B cell (primary cell): ENCODE measurements at regions of chr1 and their contacts with region 1.

Region 1: GRCh38 chr1:92817986-92818764 is 13.7 kb upstream of the RPL5 start:
- DNase-seq: peak; percentile 63
- ATAC-seq: peak; percentile 58
- H3K4me3 ChIP-seq: no peak overlapping the region
- H3K4me3 Mint-ChIP-seq: no peak overlapping the region
- H3K27ac ChIP-seq: no peak overlapping the region
- H3K27ac Mint-ChIP-seq: no peak overlapping the region
- H3K4me1 ChIP-seq: no peaks in the 10 kb centered on the region
- H3K4me1 Mint-ChIP-seq: peaks cover 2% of the 10 kb centered on the region
- H3K27me3 ChIP-seq: no peaks in the 10 kb centered on the region
- H3K27me3 Mint-ChIP-seq: peaks cover 4% of the 10 kb centered on the region
- CTCF ChIP-seq: peak; percentile 80

Region 2: GRCh38 chr1:92201973-92202372 is 616.2 kb before region 1 on chr1:
- CTCF ChIA-PET with region 1: no interaction called
- POLR2A ChIA-PET with region 1: no interaction called
- intact Hi-C with region 1: no loop called
- DNase-seq: no peak
- ATAC-seq: no peak
- H3K4me3 ChIP-seq: no peak overlapping the region
- H3K4me3 Mint-ChIP-seq: no peak overlapping the region
- H3K27ac ChIP-seq: no peak overlapping the region
- H3K27ac Mint-ChIP-seq: no peak overlapping the region
- H3K4me1 ChIP-seq: no peaks in the 10 kb centered on the region
- H3K4me1 Mint-ChIP-seq: no peaks in the 10 kb centered on the region
- H3K27me3 ChIP-seq: no peaks in the 10 kb centered on the region
- H3K27me3 Mint-ChIP-seq: peaks cover 3% of the 10 kb centered on the region
- CTCF ChIP-seq: no peak

Region 3: GRCh38 chr1:92310185-92310597 is 508.0 kb before region 1 on chr1:
- CTCF ChIA-PET with region 1: interaction called, 20 read pairs
- POLR2A ChIA-PET with region 1: no interaction called
- intact Hi-C with region 1: loop called (anchors 1 kb)
- DNase-seq: peak; percentile 26
- ATAC-seq: no peak
- H3K4me3 ChIP-seq: no peak overlapping the region
- H3K4me3 Mint-ChIP-seq: no peak overlapping the region
- H3K27ac ChIP-seq: no peak overlapping the region
- H3K27ac Mint-ChIP-seq: no peak overlapping the region
- H3K4me1 ChIP-seq: no peaks in the 10 kb centered on the region
- H3K4me1 Mint-ChIP-seq: no peaks in the 10 kb centered on the region
- H3K27me3 ChIP-seq: no peaks in the 10 kb centered on the region
- H3K27me3 Mint-ChIP-seq: no peaks in the 10 kb centered on the region
- CTCF ChIP-seq: peak; percentile 76

Region 4: GRCh38 chr1:92356956-92357355 is 461.2 kb before region 1 on chr1:
- CTCF ChIA-PET with region 1: no interaction called
- POLR2A ChIA-PET with region 1: no interaction called
- intact Hi-C with region 1: no loop called
- DNase-seq: no peak
- ATAC-seq: no peak
- H3K4me3 ChIP-seq: no peak overlapping the region
- H3K4me3 Mint-ChIP-seq: no peak overlapping the region
- H3K27ac ChIP-seq: no peak overlapping the region
- H3K27ac Mint-ChIP-seq: no peak overlapping the region
- H3K4me1 ChIP-seq: no peaks in the 10 kb centered on the region
- H3K4me1 Mint-ChIP-seq: no peaks in the 10 kb centered on the region
- H3K27me3 ChIP-seq: no peaks in the 10 kb centered on the region
- H3K27me3 Mint-ChIP-seq: no peaks in the 10 kb centered on the region
- CTCF ChIP-seq: no peak

Region 5: GRCh38 chr1:92749024-92749634 is 69.0 kb before region 1 on chr1:
- CTCF ChIA-PET with region 1: interaction called, 168 read pairs
- POLR2A ChIA-PET with region 1: interaction called, 5 read pairs
- intact Hi-C with region 1: loop called (anchors 1 kb)
- DNase-seq: peak; percentile 68
- ATAC-seq: peak; percentile 70
- H3K4me3 ChIP-seq: no peak overlapping the region
- H3K4me3 Mint-ChIP-seq: no peak overlapping the region
- H3K27ac ChIP-seq: no peak overlapping the region
- H3K27ac Mint-ChIP-seq: no peak overlapping the region
- H3K4me1 ChIP-seq: no peaks in the 10 kb centered on the region
- H3K4me1 Mint-ChIP-seq: peaks cover 8% of the 10 kb centered on the region
- H3K27me3 ChIP-seq: no peaks in the 10 kb centered on the region
- H3K27me3 Mint-ChIP-seq: no peaks in the 10 kb centered on the region
- CTCF ChIP-seq: peak; percentile 79

Region 6: DNA sequence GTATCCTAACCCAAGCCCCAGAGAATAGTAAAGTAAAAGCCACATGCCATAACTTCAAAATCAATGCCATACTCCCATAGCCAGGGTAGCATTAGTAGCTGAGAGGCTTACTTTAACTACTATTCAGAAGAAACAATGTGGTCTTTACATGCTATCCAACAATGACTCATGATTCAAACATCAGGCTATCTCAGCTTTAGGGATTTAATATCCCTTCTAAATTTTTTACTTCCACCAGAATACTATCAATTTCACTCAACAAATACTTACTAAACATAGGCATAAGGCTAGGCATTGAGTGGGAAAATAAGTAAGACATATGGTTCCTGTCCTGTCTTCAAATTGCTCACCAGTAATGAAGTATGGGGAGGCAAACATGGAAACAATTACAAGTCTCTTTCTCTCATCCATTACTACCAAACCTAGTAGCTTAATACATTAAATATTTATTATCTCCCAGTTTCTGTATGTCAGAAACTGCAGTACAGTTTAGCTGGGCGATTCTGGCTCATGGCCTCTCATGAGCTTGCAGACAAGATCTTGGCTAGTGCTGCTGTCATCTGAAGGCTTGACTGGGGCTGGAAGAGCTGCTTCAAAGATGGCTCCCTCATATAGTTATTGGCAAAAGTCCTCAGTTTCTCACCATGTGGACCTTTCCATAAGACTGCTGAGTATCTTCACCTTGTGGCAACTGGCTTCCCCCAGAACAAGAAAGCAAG is 64.0 kb before region 1 on chr1:
- CTCF ChIA-PET with region 1: interaction called, 168 read pairs
- POLR2A ChIA-PET with region 1: no interaction called
- intact Hi-C with region 1: loop called (anchors 1 kb)
- DNase-seq: no peak
- ATAC-seq: no peak
- H3K4me3 ChIP-seq: no peak overlapping the region
- H3K4me3 Mint-ChIP-seq: no peak overlapping the region
- H3K27ac ChIP-seq: no peak overlapping the region
- H3K27ac Mint-ChIP-seq: no peak overlapping the region
- H3K4me1 ChIP-seq: no peaks in the 10 kb centered on the region
- H3K4me1 Mint-ChIP-seq: peaks cover 6% of the 10 kb centered on the region
- H3K27me3 ChIP-seq: no peaks in the 10 kb centered on the region
- H3K27me3 Mint-ChIP-seq: no peaks in the 10 kb centered on the region
- CTCF ChIP-seq: no peak

Region 7: GRCh38 chr1:92784639-92785500 is 33.3 kb before region 1 on chr1 and contains the start of gene EVI5:
- CTCF ChIA-PET with region 1: interaction called, 22 read pairs
- POLR2A ChIA-PET with region 1: no interaction called
- intact Hi-C with region 1: no loop called
- DNase-seq: peak; percentile 95
- ATAC-seq: peak; percentile 89
- H3K4me3 ChIP-seq: peak within 1 kb of the TSS; percentile 54 to 87 (median 71)
- H3K4me3 Mint-ChIP-seq: peak within 1 kb of the TSS; percentile 94
- H3K27ac ChIP-seq: peak within 1 kb of the TSS; percentile 80 to 94
- H3K27ac Mint-ChIP-seq: peak within 1 kb of the TSS; percentile 95
- H3K4me1 ChIP-seq: peaks cover 7 to 17% of the 10 kb centered on the region in 2 donors
- H3K4me1 Mint-ChIP-seq: peaks cover 26% of the 10 kb centered on the region
- H3K27me3 ChIP-seq: no peaks in the 10 kb centered on the region
- H3K27me3 Mint-ChIP-seq: no peaks in the 10 kb centered on the region
- CTCF ChIP-seq: no peak
- total RNA-seq, gene EVI5: 35.4 and 36.3 TPM in 2 replicates

Region 8: GRCh38 chr1:92831762-92832536 is 13.8 kb after region 1 on chr1 and contains the start of gene RPL5:
- CTCF ChIA-PET with region 1: interaction called, 27 read pairs
- POLR2A ChIA-PET with region 1: no interaction called
- intact Hi-C with region 1: no loop called
- DNase-seq: peak; percentile 100
- ATAC-seq: peak; percentile 88
- H3K4me3 ChIP-seq: peak within 1 kb of the TSS; percentile 84 to 98 (median 92)
- H3K4me3 Mint-ChIP-seq: peak within 1 kb of the TSS; percentile 100
- H3K27ac ChIP-seq: peak within 1 kb of the TSS; percentile 90 to 96
- H3K27ac Mint-ChIP-seq: peak within 1 kb of the TSS; percentile 100
- H3K4me1 ChIP-seq: peaks cover 25 to 28% of the 10 kb centered on the region in 2 donors
- H3K4me1 Mint-ChIP-seq: peaks cover 47% of the 10 kb centered on the region
- H3K27me3 ChIP-seq: no peaks in the 10 kb centered on the region
- H3K27me3 Mint-ChIP-seq: no peaks in the 10 kb centered on the region
- CTCF ChIP-seq: peak; percentile 89
- total RNA-seq, gene RPL5: 1,049 and 1,104 TPM in 2 replicates

Region 9: DNA sequence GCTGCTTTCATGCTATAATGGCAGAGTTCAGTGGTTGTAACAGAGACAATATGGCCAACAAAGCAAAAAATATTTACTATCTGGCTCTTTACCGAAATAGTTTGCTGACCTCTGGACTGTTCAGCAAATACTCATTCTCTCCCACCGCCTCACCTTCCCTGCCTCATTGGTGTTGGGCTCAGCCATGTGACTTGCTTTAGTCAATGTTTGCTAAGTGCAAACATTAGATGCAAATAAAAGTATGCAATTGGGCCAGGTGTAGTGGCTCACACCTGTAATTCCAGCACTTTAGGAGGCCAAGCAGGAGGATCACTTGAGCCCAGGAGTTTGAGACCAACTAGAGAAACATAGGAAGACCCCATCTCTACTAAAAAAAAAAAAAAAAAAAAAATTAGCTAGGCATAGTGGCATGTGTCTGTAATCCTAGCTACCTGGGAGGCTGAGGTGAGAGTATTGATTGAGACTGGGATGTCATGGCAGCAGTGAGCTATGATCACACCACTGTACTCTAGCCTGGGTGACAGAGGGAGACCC is 68.8 kb after region 1 on chr1:
- CTCF ChIA-PET with region 1: no interaction called
- POLR2A ChIA-PET with region 1: no interaction called
- intact Hi-C with region 1: no loop called
- DNase-seq: no peak
- ATAC-seq: no peak
- H3K4me3 ChIP-seq: no peak overlapping the region
- H3K4me3 Mint-ChIP-seq: no peak overlapping the region
- H3K27ac ChIP-seq: peak overlapping the region in 1 of 2 donors; percentile 17
- H3K27ac Mint-ChIP-seq: peak overlapping the region; percentile 35
- H3K4me1 ChIP-seq: peaks cover 16 to 21% of the 10 kb centered on the region in 2 donors
- H3K4me1 Mint-ChIP-seq: peaks cover 46% of the 10 kb centered on the region
- H3K27me3 ChIP-seq: no peaks in the 10 kb centered on the region
- H3K27me3 Mint-ChIP-seq: no peaks in the 10 kb centered on the region
- CTCF ChIP-seq: no peak

Region 10: DNA sequence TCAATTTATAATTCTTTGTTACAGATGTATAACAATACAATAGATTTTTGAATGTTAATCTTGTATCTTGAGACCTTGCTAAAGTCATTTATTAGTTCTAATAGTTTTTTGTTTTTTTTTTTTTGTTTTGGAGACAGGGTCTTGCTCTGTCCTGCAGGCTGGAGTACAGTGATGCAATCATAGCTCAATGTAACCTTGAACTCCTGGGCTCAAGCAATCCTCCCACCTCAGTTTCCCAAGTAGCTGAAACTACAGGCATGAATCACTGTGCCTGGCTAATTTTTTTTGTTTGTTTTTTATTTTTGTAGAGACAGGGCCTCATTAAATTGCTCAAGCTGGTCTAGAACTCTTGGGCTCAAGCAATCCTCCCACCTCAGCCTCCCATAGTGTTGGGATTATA is 169.3 kb after region 1 on chr1:
- CTCF ChIA-PET with region 1: no interaction called
- POLR2A ChIA-PET with region 1: no interaction called
- intact Hi-C with region 1: no loop called
- DNase-seq: no peak
- ATAC-seq: no peak
- H3K4me3 ChIP-seq: no peak overlapping the region
- H3K4me3 Mint-ChIP-seq: no peak overlapping the region
- H3K27ac ChIP-seq: no peak overlapping the region
- H3K27ac Mint-ChIP-seq: no peak overlapping the region
- H3K4me1 ChIP-seq: peaks cover 29% of the 10 kb centered on the region in 2 donors
- H3K4me1 Mint-ChIP-seq: peaks cover 37% of the 10 kb centered on the region
- H3K27me3 ChIP-seq: no peaks in the 10 kb centered on the region
- H3K27me3 Mint-ChIP-seq: no peaks in the 10 kb centered on the region
- CTCF ChIP-seq: no peak